ENCODE measurements at regions of chrX and their contacts with region 1.

Region 1: DNA sequence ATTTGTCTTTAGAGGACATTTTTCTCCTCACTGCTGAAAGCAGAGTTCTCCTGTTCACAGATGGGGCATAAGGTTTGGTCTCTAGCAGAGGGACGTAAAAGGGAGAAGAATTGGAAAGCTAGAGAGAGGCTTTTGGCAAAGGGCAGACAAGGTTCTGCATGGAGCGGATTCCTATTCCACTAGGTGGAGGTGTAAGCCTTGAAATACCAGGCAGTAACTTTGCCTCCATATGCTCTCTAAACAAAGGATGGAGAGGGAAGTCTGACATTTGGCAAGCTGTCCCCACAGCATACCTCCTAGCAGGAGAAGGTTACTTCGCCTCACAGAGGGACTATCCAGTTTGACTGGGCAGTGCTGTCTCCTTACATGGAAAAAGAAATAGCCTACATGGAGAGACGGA is 174.7 kb downstream of the DACH2 start:
- DNase-seq: no peak
- ATAC-seq: no peak; the same call in 1 of the 2 replicates
- H3K4me3 ChIP-seq: no peak overlapping the region
- H3K27ac ChIP-seq: no peak overlapping the region
- H3K4me1 ChIP-seq: no peaks in the 10 kb centered on the region
- H3K27me3 ChIP-seq: no peaks in the 10 kb centered on the region
- CTCF ChIP-seq: peak; percentile 36

Region 2: GRCh38 chrX:86295293-86295692 is 27.6 kb before region 1 on chrX:
- CTCF ChIA-PET with region 1: no interaction called
- POLR2A ChIA-PET with region 1: no interaction called
- in situ Hi-C with region 1: no loop called
- intact Hi-C with region 1: no loop called
- DNase-seq: no peak
- ATAC-seq: no peak
- H3K4me3 ChIP-seq: no peak overlapping the region
- H3K27ac ChIP-seq: no peak overlapping the region
- H3K4me1 ChIP-seq: no peaks in the 10 kb centered on the region
- H3K27me3 ChIP-seq: no peaks in the 10 kb centered on the region
- CTCF ChIP-seq: no peak

Region 3: GRCh38 chrX:86946569-86946968 is 623.7 kb after region 1 on chrX:
- CTCF ChIA-PET with region 1: no interaction called
- POLR2A ChIA-PET with region 1: no interaction called
- in situ Hi-C with region 1: no loop called
- intact Hi-C with region 1: loop called (anchors 10 kb)
- DNase-seq: peak; percentile 7
- ATAC-seq: no peak
- H3K4me3 ChIP-seq: no peak overlapping the region
- H3K27ac ChIP-seq: no peak overlapping the region
- H3K4me1 ChIP-seq: no peaks in the 10 kb centered on the region
- H3K27me3 ChIP-seq: no peaks in the 10 kb centered on the region
- CTCF ChIP-seq: peak; percentile 68; the same call in 1 of the 2 replicates

Measured in Panc1 (cell line).